Panc1 (cell line): ENCODE measurements at regions of chr21 and their contacts with region 1.

Region 1: DNA sequence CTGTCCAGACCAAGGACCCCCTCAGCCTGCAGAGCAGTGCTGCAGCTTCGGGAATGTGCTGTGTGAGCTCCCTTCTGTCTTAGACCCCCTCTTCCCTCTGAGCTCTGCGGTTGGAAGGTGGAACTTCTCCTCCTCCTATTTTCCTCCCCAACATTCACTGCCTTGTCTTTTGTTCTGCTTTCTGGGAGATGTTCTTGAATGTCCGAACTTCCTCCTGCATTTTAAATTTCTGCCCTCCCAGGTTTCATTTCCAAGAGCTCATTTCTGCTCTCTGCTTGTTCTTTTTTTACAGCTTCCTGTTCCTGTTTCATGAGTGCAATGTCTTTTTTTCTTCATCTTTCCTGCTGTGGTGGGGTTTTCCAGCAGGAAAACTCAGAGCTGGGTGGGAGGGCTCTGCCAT is 29.3 kb downstream of the RRP1 start:
- DNase-seq: no peak
- ATAC-seq: no peak
- H3K4me3 ChIP-seq: no peak overlapping the region
- H3K27ac ChIP-seq: no peak overlapping the region
- H3K4me1 ChIP-seq: no peaks in the 10 kb centered on the region
- H3K27me3 ChIP-seq: no peaks in the 10 kb centered on the region
- CTCF ChIP-seq: no peak

Region 2: DNA sequence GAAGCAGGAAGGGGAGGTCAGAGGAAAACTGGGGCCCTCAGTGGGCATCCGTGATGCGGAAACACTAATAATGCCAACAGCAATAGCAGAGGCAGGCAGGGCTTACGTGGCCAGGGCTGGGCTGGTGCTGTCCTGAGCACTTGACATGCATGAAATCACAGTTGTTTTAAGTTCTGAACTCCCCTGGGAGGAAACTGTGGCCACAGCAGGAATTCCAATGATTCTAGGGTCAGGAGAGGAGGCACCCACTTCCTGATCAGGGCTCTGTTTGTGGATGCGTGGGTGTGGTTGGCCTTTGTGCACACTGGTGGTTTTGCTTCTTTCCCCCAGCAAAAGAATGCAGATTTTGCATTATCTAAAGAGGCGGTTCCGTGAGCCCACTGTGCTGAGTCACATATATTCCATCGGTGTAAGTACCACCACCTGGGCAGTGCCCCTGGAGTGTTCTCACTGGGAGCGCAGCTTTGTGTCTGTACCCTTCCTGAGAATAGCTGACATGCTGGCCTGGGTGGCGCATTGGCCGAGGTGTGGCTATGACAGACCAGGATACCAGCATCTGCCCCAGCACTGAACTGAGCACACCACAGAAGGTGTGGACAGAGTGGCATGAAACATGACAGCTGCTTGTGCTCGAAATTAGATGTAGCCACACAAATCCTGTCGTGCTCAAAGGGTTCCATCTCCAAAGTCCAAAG is 1094.3 kb before region 1 on chr21:
- CTCF ChIA-PET with region 1: no interaction called
- POLR2A ChIA-PET with region 1: no interaction called
- in situ Hi-C with region 1: no loop called
- intact Hi-C with region 1: no loop called
- DNase-seq: no peak
- ATAC-seq: no peak
- H3K4me3 ChIP-seq: no peak overlapping the region
- H3K27ac ChIP-seq: no peak overlapping the region
- H3K4me1 ChIP-seq: no peaks in the 10 kb centered on the region
- H3K27me3 ChIP-seq: no peaks in the 10 kb centered on the region; the same call in 1 of the 2 replicates
- CTCF ChIP-seq: no peak

Region 3: GRCh38 chr21:43916691-43917514 is 98.2 kb after region 1 on chr21:
- CTCF ChIA-PET with region 1: no interaction called
- POLR2A ChIA-PET with region 1: no interaction called
- in situ Hi-C with region 1: no loop called
- intact Hi-C with region 1: no loop called
- DNase-seq: no peak
- ATAC-seq: no peak
- H3K4me3 ChIP-seq: no peak overlapping the region
- H3K27ac ChIP-seq: no peak overlapping the region
- H3K4me1 ChIP-seq: no peaks in the 10 kb centered on the region
- H3K27me3 ChIP-seq: no peaks in the 10 kb centered on the region
- CTCF ChIP-seq: no peak

Region 4: GRCh38 chr21:43931489-43931888 is 112.8 kb after region 1 on chr21:
- CTCF ChIA-PET with region 1: interaction called, 3 read pairs
- POLR2A ChIA-PET with region 1: interaction called, 10 read pairs
- in situ Hi-C with region 1: no loop called
- intact Hi-C with region 1: no loop called
- DNase-seq: no peak
- ATAC-seq: no peak
- H3K4me3 ChIP-seq: no peak overlapping the region
- H3K27ac ChIP-seq: no peak overlapping the region
- H3K4me1 ChIP-seq: no peaks in the 10 kb centered on the region
- H3K27me3 ChIP-seq: no peaks in the 10 kb centered on the region
- CTCF ChIP-seq: no peak